ENCODE measurements at regions of chr22 and their contacts with region 1.

Region 1: DNA sequence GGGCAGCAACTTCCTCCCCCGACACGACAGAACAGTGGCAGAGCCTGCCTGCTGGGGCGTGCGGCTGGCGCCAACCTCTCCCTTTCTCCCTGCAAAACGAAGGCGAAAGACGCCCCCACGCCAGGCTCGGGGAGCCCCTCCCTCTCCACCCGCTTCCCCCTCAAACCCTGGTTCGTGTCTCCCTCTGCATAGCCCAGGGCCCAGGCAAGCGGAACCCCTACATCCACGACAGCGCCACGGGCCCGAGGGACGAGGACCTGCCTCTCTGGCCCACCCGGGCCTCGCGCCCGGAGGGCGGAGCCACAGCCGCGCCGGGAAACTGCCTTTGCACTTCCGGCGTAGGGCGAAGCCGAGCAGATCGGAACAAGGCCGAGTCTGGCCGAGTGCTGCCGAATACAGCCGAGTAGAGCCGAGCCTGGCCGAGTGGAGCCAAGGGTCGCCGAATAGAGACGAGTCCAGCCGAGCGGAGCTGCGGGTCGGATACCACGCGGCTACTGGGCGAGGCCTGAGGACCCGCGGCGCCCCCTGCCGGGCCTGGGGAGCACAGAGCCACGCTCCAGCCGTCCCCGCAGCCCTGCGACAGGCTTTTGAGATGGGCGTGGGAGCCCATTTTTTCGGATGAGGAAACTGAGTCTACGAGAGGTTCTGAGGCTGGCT is 11.2 kb upstream of the C1QTNF6 start:
- DNase-seq: peak; percentile 99
- H3K4me3 ChIP-seq: peak overlapping the region; percentile 56 to 62 (median 60)
- H3K27ac ChIP-seq: peak overlapping the region; percentile 91 to 97 (median 94)
- H3K4me1 ChIP-seq: peaks cover 0 to 39% (median 35%) of the 10 kb centered on the region in 4 donors
- H3K27me3 ChIP-seq: no peaks in the 10 kb centered on the region
- CTCF ChIP-seq: peak; percentile 84 to 93 (median 88)
- EP300 ChIP-seq: no peak
- POLR2A ChIP-seq: peak; percentile 98 to 99

Region 2: GRCh38 chr22:36781656-36782627 is 417.3 kb before region 1 on chr22:
- intact Hi-C with region 1: loop called (anchors 2 kb)
- DNase-seq: peak; percentile 87
- H3K4me3 ChIP-seq: no peak overlapping the region
- H3K27ac ChIP-seq: peak overlapping the region; percentile 32 to 54 (median 46)
- H3K4me1 ChIP-seq: peaks cover 0 to 11% (median 8%) of the 10 kb centered on the region in 4 donors
- H3K27me3 ChIP-seq: no peaks in the 10 kb centered on the region
- CTCF ChIP-seq: peak; percentile 71 to 95 (median 87)
- EP300 ChIP-seq: no peak
- POLR2A ChIP-seq: no peak

Region 3: DNA sequence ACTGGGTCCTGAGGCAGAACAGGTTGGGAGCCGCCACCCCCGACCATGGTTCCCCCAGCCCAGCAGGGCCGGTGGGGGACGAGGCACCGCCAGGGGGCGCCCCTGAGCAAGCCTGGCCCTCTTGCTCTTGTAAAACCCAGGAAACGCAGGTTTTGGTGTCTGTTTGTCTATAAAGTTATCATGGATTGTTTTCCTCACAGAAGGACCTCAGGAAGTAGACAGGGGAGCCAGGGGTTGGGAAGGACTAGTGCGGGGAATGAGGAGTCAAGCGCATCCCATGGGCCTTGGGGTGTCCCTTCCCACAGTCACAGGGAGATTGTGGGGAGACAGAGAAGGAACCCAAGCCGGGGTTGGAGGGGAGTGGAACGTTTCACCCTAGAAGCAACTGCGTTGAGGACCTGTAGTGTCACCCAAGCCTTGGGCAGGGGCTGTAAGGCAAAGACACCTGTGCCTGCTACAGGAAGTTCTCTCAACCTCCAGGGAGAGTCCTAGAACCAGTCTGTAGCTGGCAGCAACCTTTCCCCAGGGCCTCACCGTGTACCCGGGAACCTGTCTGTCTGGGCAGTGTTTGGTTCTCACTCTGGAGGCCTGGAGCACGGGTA is 121.2 kb before region 1 on chr22:
- intact Hi-C with region 1: loop called (anchors 5 kb)
- DNase-seq: no peak
- H3K4me3 ChIP-seq: no peak overlapping the region
- H3K27ac ChIP-seq: no peak overlapping the region
- H3K4me1 ChIP-seq: no peaks in the 10 kb centered on the region
- H3K27me3 ChIP-seq: peaks cover 0 to 49% (median 0%) of the 10 kb centered on the region in 3 donors
- CTCF ChIP-seq: peak; percentile 22 to 68 (median 66)
- EP300 ChIP-seq: no peak
- POLR2A ChIP-seq: no peak

Region 4: GRCh38 chr22:37166675-37167066 is 32.6 kb before region 1 on chr22:
- intact Hi-C with region 1: loop called (anchors 1 kb)
- DNase-seq: peak; percentile 93
- H3K4me3 ChIP-seq: no peak overlapping the region
- H3K27ac ChIP-seq: peak overlapping the region in 3 of 4 donors; percentile 5 to 24 (median 9)
- H3K4me1 ChIP-seq: peaks cover 0 to 7% (median 5%) of the 10 kb centered on the region in 4 donors
- H3K27me3 ChIP-seq: no peaks in the 10 kb centered on the region
- CTCF ChIP-seq: peak; percentile 89 to 92 (median 90)
- EP300 ChIP-seq: no peak
- POLR2A ChIP-seq: no peak

Region 5: DNA sequence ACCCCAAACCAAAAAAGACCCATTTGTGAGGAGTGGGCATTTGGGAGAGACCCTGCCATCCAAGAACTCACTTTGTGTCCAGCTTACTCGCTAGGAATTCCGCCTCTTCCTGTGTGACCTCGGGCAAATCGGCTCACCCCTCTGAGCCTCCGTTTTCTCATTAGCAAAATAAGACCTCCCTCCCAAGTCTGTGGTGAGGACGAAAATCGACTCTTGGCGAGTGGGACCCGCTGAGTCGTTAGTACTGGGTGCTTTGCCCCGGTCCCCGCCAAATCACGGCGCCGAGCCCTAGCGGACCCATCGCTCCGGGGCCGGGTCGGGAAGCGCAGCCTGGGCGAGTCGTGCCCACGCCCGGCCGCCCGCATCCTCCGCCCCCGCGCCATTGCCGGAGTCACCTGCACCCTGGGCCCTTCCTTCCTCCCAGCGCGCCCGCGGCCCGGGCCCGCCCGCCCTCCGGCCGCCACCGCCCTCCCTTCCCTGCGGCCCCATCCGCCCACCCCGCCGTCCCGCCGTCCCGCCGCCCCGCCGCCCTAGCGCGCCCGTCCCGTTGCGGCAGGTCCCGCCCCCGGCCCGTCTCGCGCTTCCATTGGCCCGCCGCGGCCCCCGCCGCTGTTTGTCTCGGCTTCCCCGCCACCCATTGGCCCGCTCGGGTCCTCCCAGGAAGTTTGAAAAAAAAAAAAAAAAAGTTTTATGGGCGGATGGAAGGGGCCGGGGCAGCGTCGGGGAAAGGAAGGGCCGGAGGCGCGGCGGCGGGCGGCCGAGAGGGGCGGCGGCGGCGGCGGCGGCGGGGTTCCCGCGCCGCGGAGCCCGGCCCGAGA is 546.5 kb after region 1 on chr22:
- intact Hi-C with region 1: loop called (anchors 5 kb)
- DNase-seq: peak; percentile 96
- H3K4me3 ChIP-seq: peak overlapping the region; percentile 72 to 99 (median 76)
- H3K27ac ChIP-seq: peak overlapping the region; percentile 91 to 98 (median 98)
- H3K4me1 ChIP-seq: peaks cover 0 to 89% (median 84%) of the 10 kb centered on the region in 4 donors
- H3K27me3 ChIP-seq: no peaks in the 10 kb centered on the region
- CTCF ChIP-seq: no peak
- EP300 ChIP-seq: no peak
- POLR2A ChIP-seq: no peak

Region 6: DNA sequence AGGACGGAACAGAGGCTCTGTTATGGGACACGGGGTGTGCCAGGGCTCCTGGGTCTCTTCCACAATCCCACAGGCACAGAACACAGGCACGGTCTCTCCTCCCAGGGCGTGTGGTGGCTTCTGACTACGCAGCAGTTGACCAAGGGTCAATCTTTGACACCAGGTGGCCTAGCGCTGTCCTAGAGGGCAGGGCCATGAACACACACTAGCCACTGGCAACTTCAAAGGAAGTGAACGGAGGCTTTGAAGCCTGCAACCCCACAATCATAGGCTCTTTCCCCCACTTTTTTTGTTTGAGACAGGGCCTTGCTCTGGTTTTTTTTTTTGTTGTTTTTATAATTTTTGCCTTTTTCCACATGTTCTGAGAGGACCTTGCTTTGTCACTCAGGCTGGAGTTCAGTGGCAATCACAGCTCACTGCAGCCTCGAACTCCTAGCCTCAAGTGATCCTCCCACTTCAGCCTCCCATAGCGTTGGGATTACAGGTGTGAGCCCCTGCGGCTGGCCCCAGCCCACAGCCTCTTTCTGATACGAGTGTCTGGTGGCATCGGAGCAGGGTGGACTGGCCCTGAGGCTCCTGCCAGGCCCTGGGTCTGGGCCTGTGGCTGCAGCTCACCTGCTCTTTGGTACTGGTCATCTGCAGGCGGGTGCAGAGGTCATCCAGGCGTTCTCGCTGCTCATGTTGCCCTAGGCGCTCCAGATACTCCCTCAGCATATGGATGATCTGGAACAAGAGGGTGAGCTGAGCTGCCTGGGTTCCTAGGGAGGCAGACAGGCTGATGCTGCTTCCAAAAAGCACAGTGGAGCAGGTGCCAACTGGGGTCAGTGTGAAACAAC is 633.0 kb after region 1 on chr22:
- intact Hi-C with region 1: no loop called
- DNase-seq: no peak
- H3K4me3 ChIP-seq: no peak overlapping the region
- H3K27ac ChIP-seq: no peak overlapping the region
- H3K4me1 ChIP-seq: peaks cover 0 to 5% (median 2%) of the 10 kb centered on the region in 4 donors
- H3K27me3 ChIP-seq: no peaks in the 10 kb centered on the region
- CTCF ChIP-seq: no peak
- EP300 ChIP-seq: no peak
- POLR2A ChIP-seq: no peak

Measured in sigmoid colon (tissue), 7 donors.